ENCODE measurements at regions of chr14 and their contacts with region 1.

Region 1: GRCh38 chr14:67680121-67680602 is 5.7 kb upstream of the VTI1B start:
- H3K4me3 Mint-ChIP-seq: no peak overlapping the region
- H3K27ac Mint-ChIP-seq: peak overlapping the region; percentile 86
- H3K4me1 Mint-ChIP-seq: peaks cover 30% of the 10 kb centered on the region
- H3K27me3 Mint-ChIP-seq: no peaks in the 10 kb centered on the region

Region 2: GRCh38 chr14:67343601-67344230 is 336.4 kb before region 1 on chr14:
- intact Hi-C with region 1: no loop called
- H3K4me3 Mint-ChIP-seq: no peak overlapping the region
- H3K27ac Mint-ChIP-seq: no peak overlapping the region
- H3K4me1 Mint-ChIP-seq: no peaks in the 10 kb centered on the region
- H3K27me3 Mint-ChIP-seq: no peaks in the 10 kb centered on the region

Region 3: DNA sequence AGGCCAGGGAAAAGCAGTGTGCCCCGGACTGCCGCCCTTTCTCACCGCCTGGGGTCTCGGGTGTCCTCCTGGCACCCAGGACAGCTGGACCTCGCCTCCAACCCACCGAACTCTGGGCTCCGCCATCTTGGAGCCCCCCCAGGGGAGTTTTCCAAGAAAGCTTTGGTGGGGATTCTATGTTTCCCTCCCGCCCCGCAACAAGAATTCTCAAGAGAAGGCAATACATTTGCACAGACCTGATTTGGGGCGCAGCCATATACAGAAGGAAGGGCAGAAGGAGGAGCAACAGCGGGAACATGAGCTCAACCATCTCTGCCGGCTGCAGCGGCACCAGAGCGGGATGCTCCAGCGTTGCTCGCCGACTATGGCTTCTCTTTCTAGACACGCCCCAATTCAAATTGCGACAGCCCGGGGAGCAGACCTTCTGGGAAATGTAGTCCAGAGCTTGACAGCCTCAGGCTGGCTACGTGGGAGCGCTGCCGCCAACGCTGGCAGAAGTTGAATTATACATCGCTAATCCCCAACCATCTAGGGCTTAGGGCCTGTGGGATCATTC is 15.3 kb after region 1 on chr14 and contains the start of gene RDH11:
- intact Hi-C with region 1: loop called (anchors 2 kb)
- H3K4me3 Mint-ChIP-seq: peak within 1 kb of the TSS; percentile 89
- H3K27ac Mint-ChIP-seq: peak within 1 kb of the TSS; percentile 91
- H3K4me1 Mint-ChIP-seq: peaks cover 62% of the 10 kb centered on the region
- H3K27me3 Mint-ChIP-seq: no peaks in the 10 kb centered on the region

Measured in dendritic cell treated with granulocyte-macrophage colony-stimulating factor and Interleukin-4, amounts not matched to agents 40 ng/mL and 50 ng/mL, for 4 days (primary cell).